ENCODE measurements at regions of chr5 and their contacts with region 1.

Region 1: DNA sequence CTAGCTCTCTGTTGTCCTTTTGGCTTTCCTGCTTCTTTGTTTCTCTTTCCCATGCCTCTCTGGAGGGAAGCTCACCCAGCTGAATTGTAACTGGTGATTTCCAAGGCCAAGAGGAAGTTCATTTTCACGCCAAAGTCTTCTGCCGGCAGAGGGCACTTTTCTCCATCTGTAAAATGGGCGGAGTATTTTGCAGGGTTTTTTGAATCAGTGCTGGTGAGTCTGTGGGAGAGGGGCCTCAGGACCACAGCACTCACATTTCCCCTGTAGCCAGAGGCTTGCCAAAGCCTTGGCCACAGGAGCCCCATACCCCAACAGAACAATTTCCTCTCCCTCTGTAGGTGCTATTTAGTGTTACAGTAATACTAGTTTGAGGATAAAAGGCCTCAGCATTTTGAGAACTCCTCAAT is 42.3 kb upstream of the MATR3 start:
- DNase-seq: peak; percentile 38
- ATAC-seq: peak; percentile 89
- H3K4me3 ChIP-seq: no peak overlapping the region
- H3K27ac ChIP-seq: peak overlapping the region; percentile 38
- H3K4me1 ChIP-seq: peaks cover 14% of the 10 kb centered on the region
- H3K27me3 ChIP-seq: no peaks in the 10 kb centered on the region
- CTCF ChIP-seq: peak; percentile 65 to 78 (median 68)
- EP300 ChIP-seq: no peak
- POLR2A ChIP-seq: no peak
- RAD21 ChIP-seq: peak; percentile 68

Region 2: DNA sequence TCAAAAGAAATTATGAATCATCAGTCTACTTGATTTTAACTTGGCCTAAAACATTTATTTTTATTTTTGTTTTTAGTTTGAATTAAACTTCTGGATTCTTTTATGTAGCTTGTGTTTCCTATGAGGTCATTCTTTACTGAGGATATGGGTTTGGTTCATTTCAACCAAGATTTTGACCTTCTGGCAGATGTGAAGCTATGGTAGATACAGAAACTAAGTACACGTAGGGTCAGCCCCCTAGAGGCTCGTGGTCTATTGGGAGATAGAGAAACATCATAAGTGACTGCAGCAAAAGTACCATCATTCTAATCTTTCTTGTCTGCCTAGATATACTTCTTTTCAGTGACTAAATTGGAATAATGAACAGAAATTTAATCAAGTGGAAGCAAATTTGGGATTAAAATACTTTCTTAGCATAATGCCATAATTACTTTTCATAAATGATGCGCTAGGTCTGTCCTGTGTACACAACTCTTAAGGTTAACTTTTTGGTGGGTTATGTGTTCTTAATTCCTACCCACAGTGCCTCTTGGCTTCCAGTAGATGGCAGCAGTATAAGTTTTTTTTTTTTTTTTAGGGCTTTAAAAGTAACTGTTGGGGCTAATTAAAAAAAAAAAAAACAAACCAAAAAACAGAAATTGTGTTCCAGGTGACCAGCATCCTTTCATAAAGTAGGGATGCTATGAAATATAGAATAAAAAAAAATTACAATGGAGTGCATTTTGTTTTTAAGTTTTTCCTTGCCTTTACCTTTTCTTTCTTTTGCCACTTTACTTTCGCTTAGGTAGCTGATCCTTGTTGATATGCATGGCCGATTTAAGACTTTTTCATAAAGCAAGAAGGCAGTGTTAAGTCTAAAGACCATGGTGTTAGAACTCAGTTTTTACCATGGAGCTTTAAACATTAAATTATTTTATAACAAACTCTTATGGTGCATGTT is 426.1 kb before region 1 on chr5:
- CTCF ChIA-PET with region 1: interaction called, 18 read pairs
- POLR2A ChIA-PET with region 1: no interaction called
- RAD21 ChIA-PET with region 1: interaction called, 7 read pairs
- SMC1A ChIA-PET with region 1: interaction called, 11 read pairs
- in situ Hi-C with region 1: no loop called
- intact Hi-C with region 1: no loop called
- DNase-seq: no peak
- ATAC-seq: peak; percentile 77
- H3K4me3 ChIP-seq: no peak overlapping the region
- H3K27ac ChIP-seq: no peak overlapping the region
- H3K4me1 ChIP-seq: no peaks in the 10 kb centered on the region
- H3K27me3 ChIP-seq: no peaks in the 10 kb centered on the region
- CTCF ChIP-seq: peak; percentile 53 to 59 (median 59)
- EP300 ChIP-seq: no peak
- POLR2A ChIP-seq: no peak
- RAD21 ChIP-seq: peak; percentile 51

Region 3: DNA sequence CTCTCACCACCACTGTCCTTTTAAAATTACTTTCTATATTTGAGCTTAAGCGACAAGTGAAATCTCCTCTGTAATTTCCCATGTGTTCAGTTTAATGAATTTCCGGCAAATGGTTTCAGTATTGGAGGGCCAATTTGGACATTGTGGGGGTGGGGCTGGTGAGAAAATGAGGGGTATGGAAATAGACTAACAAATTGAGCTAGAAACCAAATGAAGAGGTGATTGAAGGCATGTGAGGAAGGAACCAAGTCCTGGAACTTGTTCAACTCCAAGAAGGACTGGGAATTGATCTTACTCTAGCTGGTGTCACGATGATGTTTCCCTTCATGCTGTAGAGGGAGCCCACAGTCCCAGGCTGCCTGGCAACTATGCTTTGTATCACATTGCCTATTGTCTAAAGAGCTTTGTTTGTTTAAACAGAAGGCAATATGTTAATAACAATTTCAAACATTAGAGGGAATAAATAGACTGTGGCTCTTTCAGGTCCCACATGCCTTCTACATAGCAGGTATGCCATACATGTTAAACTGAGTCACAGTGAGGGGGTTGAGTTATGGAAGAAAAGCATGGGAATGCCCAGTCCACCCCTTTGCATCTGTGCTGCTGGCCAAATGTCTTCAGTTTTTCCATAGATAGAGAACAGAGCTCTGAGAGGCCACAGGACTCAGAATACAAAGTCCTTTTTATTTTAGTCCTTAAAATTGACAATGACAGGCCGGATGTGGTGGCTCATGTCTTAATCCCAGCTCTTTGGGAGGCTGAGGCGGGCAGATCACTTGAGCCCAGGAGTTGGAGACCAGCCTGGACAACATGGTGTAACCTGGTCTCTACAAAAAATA is 17.3 kb after region 1 on chr5:
- CTCF ChIA-PET with region 1: interaction called, 44 read pairs
- POLR2A ChIA-PET with region 1: interaction called, 11 read pairs
- RAD21 ChIA-PET with region 1: interaction called, 28 read pairs
- SMC1A ChIA-PET with region 1: interaction called, 34 read pairs
- in situ Hi-C with region 1: no loop called
- intact Hi-C with region 1: no loop called
- DNase-seq: no peak
- ATAC-seq: peak; percentile 41
- H3K4me3 ChIP-seq: 0 out of 2 replicates have a peak overlapping the region, but pooled peaks have one; percentile 6
- H3K27ac ChIP-seq: peak overlapping the region; percentile 40
- H3K4me1 ChIP-seq: peaks cover 38% of the 10 kb centered on the region
- H3K27me3 ChIP-seq: no peaks in the 10 kb centered on the region
- CTCF ChIP-seq: peak; percentile 13 to 21 (median 14); a peak in 2 of 6 replicates
- EP300 ChIP-seq: no peak
- POLR2A ChIP-seq: no peak
- RAD21 ChIP-seq: peak; percentile 40; the same call in 1 of the 2 replicates

Region 4: DNA sequence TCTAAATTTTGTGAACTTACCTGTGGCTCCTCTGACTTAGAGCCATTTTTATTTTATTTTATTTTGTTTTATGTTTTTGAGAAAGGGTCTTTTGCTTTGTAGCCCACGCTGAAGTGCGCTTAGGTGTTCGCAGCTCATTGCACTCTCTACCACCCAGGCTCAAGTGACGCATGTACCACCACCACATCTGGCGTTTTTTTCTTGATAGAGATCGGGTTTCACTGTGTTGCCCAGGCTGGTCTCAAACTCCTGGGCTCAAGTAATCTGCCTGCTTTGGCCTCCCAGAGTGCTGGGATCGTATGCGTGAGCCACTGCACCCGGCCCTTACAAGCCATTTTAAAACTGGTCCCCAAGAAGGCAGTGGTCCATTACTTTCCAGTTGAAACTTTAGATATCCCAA is 60.8 kb after region 1 on chr5:
- CTCF ChIA-PET with region 1: interaction called, 27 read pairs
- POLR2A ChIA-PET with region 1: interaction called, 3 read pairs
- RAD21 ChIA-PET with region 1: interaction called, 6 read pairs
- SMC1A ChIA-PET with region 1: interaction called, 20 read pairs
- in situ Hi-C with region 1: no loop called
- intact Hi-C with region 1: no loop called
- DNase-seq: no peak
- ATAC-seq: no peak
- H3K4me3 ChIP-seq: no peak overlapping the region
- H3K27ac ChIP-seq: no peak overlapping the region
- H3K4me1 ChIP-seq: no peaks in the 10 kb centered on the region
- H3K27me3 ChIP-seq: no peaks in the 10 kb centered on the region
- CTCF ChIP-seq: no peak
- EP300 ChIP-seq: no peak
- POLR2A ChIP-seq: no peak
- RAD21 ChIP-seq: no peak

Region 5: GRCh38 chr5:139368613-139369012 is 117.3 kb after region 1 on chr5:
- CTCF ChIA-PET with region 1: interaction called, 17 read pairs
- POLR2A ChIA-PET with region 1: no interaction called
- RAD21 ChIA-PET with region 1: interaction called, 10 read pairs
- SMC1A ChIA-PET with region 1: interaction called, 6 read pairs
- in situ Hi-C with region 1: no loop called
- intact Hi-C with region 1: no loop called
- DNase-seq: no peak
- ATAC-seq: no peak
- H3K4me3 ChIP-seq: no peak overlapping the region
- H3K27ac ChIP-seq: no peak overlapping the region
- H3K4me1 ChIP-seq: no peaks in the 10 kb centered on the region
- H3K27me3 ChIP-seq: no peaks in the 10 kb centered on the region
- CTCF ChIP-seq: peak in 1 of 3 experiments; percentile 29; a peak in 1 of 6 replicates
- EP300 ChIP-seq: no peak
- POLR2A ChIP-seq: no peak
- RAD21 ChIP-seq: 0 out of 2 replicates have a peak, but pooled peaks have one; percentile 5

Region 6: GRCh38 chr5:139403787-139404483 is 152.7 kb after region 1 on chr5 and contains the start of gene SPATA24:
- CTCF ChIA-PET with region 1: interaction called, 10 read pairs
- POLR2A ChIA-PET with region 1: interaction called, 4 read pairs
- RAD21 ChIA-PET with region 1: interaction called, 14 read pairs
- SMC1A ChIA-PET with region 1: no interaction called
- in situ Hi-C with region 1: no loop called
- intact Hi-C with region 1: no loop called
- DNase-seq: peak; percentile 95
- ATAC-seq: peak; percentile 86
- H3K4me3 ChIP-seq: peak within 1 kb of the TSS; percentile 74
- H3K27ac ChIP-seq: peak within 1 kb of the TSS; percentile 83
- H3K4me1 ChIP-seq: peaks cover 30% of the 10 kb centered on the region
- H3K27me3 ChIP-seq: no peaks in the 10 kb centered on the region
- CTCF ChIP-seq: no peak
- EP300 ChIP-seq: 0 out of 4 replicates have a peak, but pooled peaks of 1 of the 2 experiments have one; percentile 14
- POLR2A ChIP-seq: peak; percentile 78
- RAD21 ChIP-seq: no peak
- polyA plus RNA-seq, gene SPATA24: 7.6 to 8.5 TPM

Measured in GM12878 (cell line).